ENCODE measurements at regions of chrX and their contacts with region 1.

Region 1: GRCh38 chrX:13087322-13088155 is 43.1 kb upstream of the FAM9C start:
- DNase-seq: peak; percentile 86 to 93 (median 90)
- H3K4me3 ChIP-seq: peak overlapping the region in 1 of 2 donors; percentile 21
- H3K4me3 Mint-ChIP-seq: peak overlapping the region; percentile 72 to 87 (median 76)
- H3K27ac ChIP-seq: peak overlapping the region; percentile 94
- H3K27ac Mint-ChIP-seq: peak overlapping the region; percentile 95 to 99 (median 97)
- H3K4me1 ChIP-seq: peaks cover 98% of the 10 kb centered on the region
- H3K4me1 Mint-ChIP-seq: peaks cover 54 to 99% (median 77%) of the 10 kb centered on the region in 4 donors
- H3K27me3 ChIP-seq: no peaks in the 10 kb centered on the region
- H3K27me3 Mint-ChIP-seq: no peaks in the 10 kb centered on the region

Region 2: DNA sequence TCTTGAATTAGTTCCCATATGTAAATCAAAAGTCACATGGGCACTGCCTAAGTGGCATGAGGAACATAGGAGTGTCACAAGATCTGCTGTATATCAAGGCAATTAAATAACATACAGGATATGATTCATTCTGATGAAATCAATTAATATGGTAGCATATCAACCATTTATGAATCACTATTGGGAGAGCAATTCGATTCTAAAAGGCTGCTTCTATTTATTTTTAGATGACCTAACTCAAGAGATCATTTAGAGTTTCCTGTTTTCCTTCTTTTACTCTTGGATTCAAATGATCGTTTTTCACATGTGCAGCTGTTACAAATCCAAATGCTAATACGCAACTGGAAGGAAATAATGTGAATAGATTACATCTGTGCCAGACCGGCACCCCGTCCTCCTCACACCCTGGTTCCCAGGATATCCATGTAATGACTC is 1894.5 kb before region 1 on chrX:
- CTCF ChIA-PET with region 1: no interaction called
- POLR2A ChIA-PET with region 1: no interaction called
- intact Hi-C with region 1: no loop called
- DNase-seq: no peak
- H3K4me3 ChIP-seq: no peak overlapping the region
- H3K4me3 Mint-ChIP-seq: no peak overlapping the region
- H3K27ac ChIP-seq: no peak overlapping the region
- H3K27ac Mint-ChIP-seq: no peak overlapping the region
- H3K4me1 ChIP-seq: no peaks in the 10 kb centered on the region
- H3K4me1 Mint-ChIP-seq: no peaks in the 10 kb centered on the region
- H3K27me3 ChIP-seq: no peaks in the 10 kb centered on the region
- H3K27me3 Mint-ChIP-seq: no peaks in the 10 kb centered on the region

Region 3: GRCh38 chrX:12779534-12779933 is 308.0 kb before region 1 on chrX:
- CTCF ChIA-PET with region 1: no interaction called
- POLR2A ChIA-PET with region 1: no interaction called
- intact Hi-C with region 1: no loop called
- DNase-seq: no peak
- H3K4me3 ChIP-seq: no peak overlapping the region
- H3K4me3 Mint-ChIP-seq: no peak overlapping the region
- H3K27ac ChIP-seq: no peak overlapping the region
- H3K27ac Mint-ChIP-seq: no peak overlapping the region
- H3K4me1 ChIP-seq: no peaks in the 10 kb centered on the region
- H3K4me1 Mint-ChIP-seq: no peaks in the 10 kb centered on the region
- H3K27me3 ChIP-seq: no peaks in the 10 kb centered on the region
- H3K27me3 Mint-ChIP-seq: peaks cover 1 to 2% of the 10 kb centered on the region in 2 donors

Region 4: GRCh38 chrX:12955882-12956703 is 131.4 kb before region 1 on chrX:
- CTCF ChIA-PET with region 1: interaction called, 210 read pairs
- POLR2A ChIA-PET with region 1: interaction called, 284 read pairs
- intact Hi-C with region 1: loop called (anchors 1 kb)
- DNase-seq: peak; percentile 52 to 84 (median 65)
- H3K4me3 ChIP-seq: peak overlapping the region; percentile 23 to 51
- H3K4me3 Mint-ChIP-seq: peak overlapping the region; percentile 80 to 92 (median 86)
- H3K27ac ChIP-seq: peak overlapping the region; percentile 88
- H3K27ac Mint-ChIP-seq: peak overlapping the region; percentile 94 to 99 (median 97)
- H3K4me1 ChIP-seq: peaks cover 96% of the 10 kb centered on the region
- H3K4me1 Mint-ChIP-seq: peaks cover 42 to 90% (median 73%) of the 10 kb centered on the region in 4 donors
- H3K27me3 ChIP-seq: no peaks in the 10 kb centered on the region
- H3K27me3 Mint-ChIP-seq: no peaks in the 10 kb centered on the region

Region 5: GRCh38 chrX:13000301-13000811 is 87.2 kb before region 1 on chrX:
- CTCF ChIA-PET with region 1: interaction called, 21 read pairs
- POLR2A ChIA-PET with region 1: interaction called, 101 read pairs
- intact Hi-C with region 1: no loop called
- DNase-seq: peak; percentile 55 to 68 (median 59)
- H3K4me3 ChIP-seq: no peak overlapping the region
- H3K4me3 Mint-ChIP-seq: peak overlapping the region; percentile 71 to 88 (median 78)
- H3K27ac ChIP-seq: peak overlapping the region; percentile 72
- H3K27ac Mint-ChIP-seq: peak overlapping the region; percentile 91 to 98 (median 94)
- H3K4me1 ChIP-seq: peaks cover 91% of the 10 kb centered on the region
- H3K4me1 Mint-ChIP-seq: peaks cover 45 to 84% (median 69%) of the 10 kb centered on the region in 4 donors
- H3K27me3 ChIP-seq: no peaks in the 10 kb centered on the region
- H3K27me3 Mint-ChIP-seq: no peaks in the 10 kb centered on the region

Region 6: GRCh38 chrX:13029341-13029740 is 58.2 kb before region 1 on chrX:
- CTCF ChIA-PET with region 1: interaction called, 9 read pairs
- POLR2A ChIA-PET with region 1: interaction called, 78 read pairs
- intact Hi-C with region 1: loop called (anchors 1 kb)
- DNase-seq: no peak
- H3K4me3 ChIP-seq: no peak overlapping the region
- H3K4me3 Mint-ChIP-seq: peak overlapping the region; percentile 33 to 79 (median 65)
- H3K27ac ChIP-seq: peak overlapping the region; percentile 42
- H3K27ac Mint-ChIP-seq: peak overlapping the region; percentile 74 to 94 (median 90)
- H3K4me1 ChIP-seq: peaks cover 72% of the 10 kb centered on the region
- H3K4me1 Mint-ChIP-seq: peaks cover 45 to 76% (median 61%) of the 10 kb centered on the region in 4 donors
- H3K27me3 ChIP-seq: no peaks in the 10 kb centered on the region
- H3K27me3 Mint-ChIP-seq: no peaks in the 10 kb centered on the region

Region 7: GRCh38 chrX:13123857-13124345 is 36.4 kb after region 1 on chrX:
- CTCF ChIA-PET with region 1: interaction called, 3 read pairs
- POLR2A ChIA-PET with region 1: interaction called, 12 read pairs
- intact Hi-C with region 1: no loop called
- DNase-seq: peak in 3 of 5 donors; percentile 9 to 18 (median 10)
- H3K4me3 ChIP-seq: no peak overlapping the region
- H3K4me3 Mint-ChIP-seq: peak overlapping the region; percentile 7 to 81 (median 56)
- H3K27ac ChIP-seq: peak overlapping the region; percentile 46
- H3K27ac Mint-ChIP-seq: peak overlapping the region; percentile 61 to 94 (median 90)
- H3K4me1 ChIP-seq: peaks cover 32% of the 10 kb centered on the region
- H3K4me1 Mint-ChIP-seq: peaks cover 19 to 44% (median 29%) of the 10 kb centered on the region in 4 donors
- H3K27me3 ChIP-seq: no peaks in the 10 kb centered on the region
- H3K27me3 Mint-ChIP-seq: no peaks in the 10 kb centered on the region

Region 8: GRCh38 chrX:13487731-13488523 is 400.4 kb after region 1 on chrX:
- CTCF ChIA-PET with region 1: interaction called, 65 read pairs
- POLR2A ChIA-PET with region 1: interaction called, 29 read pairs
- intact Hi-C with region 1: loop called (anchors 1 kb)
- DNase-seq: peak; percentile 45 to 65 (median 58)
- H3K4me3 ChIP-seq: no peak overlapping the region
- H3K4me3 Mint-ChIP-seq: peak overlapping the region in 2 of 8 donors; percentile 38 to 58
- H3K27ac ChIP-seq: no peak overlapping the region
- H3K27ac Mint-ChIP-seq: peak overlapping the region; percentile 57 to 89 (median 70)
- H3K4me1 ChIP-seq: peaks cover 12% of the 10 kb centered on the region
- H3K4me1 Mint-ChIP-seq: peaks cover 7 to 15% (median 13%) of the 10 kb centered on the region in 4 donors
- H3K27me3 ChIP-seq: no peaks in the 10 kb centered on the region
- H3K27me3 Mint-ChIP-seq: no peaks in the 10 kb centered on the region

Measured in CD4-positive, alpha-beta memory T cell (primary cell).